AG04450 (cell line): ENCODE measurements at regions of chr9 and their contacts with region 1.

Region 1: DNA sequence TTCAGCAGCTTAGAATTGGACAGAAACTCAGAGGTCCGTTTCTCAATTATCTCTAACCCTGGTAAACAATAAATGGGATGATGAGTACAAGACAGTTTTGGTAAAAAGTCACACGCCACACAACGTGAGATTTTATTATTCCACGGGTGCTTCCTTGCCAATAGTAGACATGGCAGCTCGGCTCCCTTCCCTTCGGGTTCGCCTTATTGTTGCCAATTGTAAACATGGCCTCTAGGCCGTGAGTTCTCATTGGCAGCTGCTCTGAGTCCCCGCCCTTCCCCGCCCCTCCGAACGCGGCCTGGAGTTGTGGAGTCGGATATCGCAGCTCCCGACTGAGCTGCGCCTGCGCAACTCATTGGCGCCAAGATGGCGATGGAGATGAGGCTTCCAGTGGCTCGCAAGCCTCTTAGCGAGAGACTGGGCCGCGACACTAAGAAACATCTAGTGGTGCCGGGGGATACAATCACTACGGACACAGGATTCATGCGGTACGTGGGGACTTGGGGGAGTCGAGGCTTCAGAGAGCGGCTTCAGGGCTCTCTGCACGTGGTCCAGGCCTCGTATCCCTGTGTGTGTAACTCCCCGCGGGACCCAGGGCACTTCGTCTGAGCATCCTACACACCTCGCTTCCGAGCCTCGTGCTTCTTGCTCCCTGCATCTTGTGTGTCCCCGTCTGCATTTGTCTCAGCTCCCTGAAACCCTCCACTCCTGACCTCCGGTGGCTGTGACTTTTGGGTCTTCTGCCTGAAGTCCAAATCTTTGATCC is at the start of gene EXOSC2:
- DNase-seq: peak; percentile 96
- H3K4me3 ChIP-seq: peak within 1 kb of the TSS; percentile 92
- H3K27ac ChIP-seq: peak within 1 kb of the TSS; percentile 21
- H3K27me3 ChIP-seq: no peaks in the 10 kb centered on the region
- CTCF ChIP-seq: no peak
- polyA plus RNA-seq, gene EXOSC2: 22.9 and 29.5 TPM in 2 replicates

Region 2: DNA sequence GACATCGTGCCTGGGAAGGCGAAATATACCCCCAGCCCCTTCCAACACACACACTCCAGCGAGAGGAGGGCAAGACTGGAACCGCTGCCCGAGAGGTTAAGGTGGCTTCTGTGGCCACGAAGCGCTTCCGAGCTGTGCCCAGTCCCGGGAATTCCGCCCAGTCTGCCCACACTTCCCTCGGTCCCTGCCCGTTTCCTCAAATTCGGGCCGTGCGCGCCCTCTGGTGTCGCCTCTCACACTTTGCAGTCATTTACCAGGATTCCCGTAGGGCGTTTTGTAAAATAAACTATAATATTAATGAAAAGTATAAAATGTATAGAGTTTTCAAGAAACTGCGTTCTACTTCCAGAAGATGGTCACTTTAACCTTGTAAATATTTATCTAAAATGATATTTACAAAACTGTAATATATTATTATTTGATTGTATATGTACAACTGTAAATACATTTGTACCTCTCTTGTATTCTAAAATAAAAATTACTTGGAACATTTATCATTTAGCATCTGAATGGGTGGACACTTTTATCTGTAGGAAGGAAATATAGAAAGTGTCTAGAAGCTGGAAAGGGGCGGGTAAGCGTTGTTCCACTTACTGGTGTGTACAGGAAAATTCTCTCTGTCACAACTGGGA is 11.0 kb before region 1 on chr9:
- CTCF ChIA-PET with region 1: interaction called, 13 read pairs
- POLR2A ChIA-PET with region 1: interaction called, 3 read pairs
- DNase-seq: no peak
- H3K4me3 ChIP-seq: peak overlapping the region; percentile 36
- H3K27ac ChIP-seq: no peak overlapping the region
- H3K27me3 ChIP-seq: peaks cover 19% of the 10 kb centered on the region
- CTCF ChIP-seq: peak; percentile 86

Region 3: GRCh38 chr9:130707225-130707976 is 13.8 kb after region 1 on chr9:
- CTCF ChIA-PET with region 1: interaction called, 15 read pairs
- POLR2A ChIA-PET with region 1: interaction called, 4 read pairs
- DNase-seq: peak; percentile 54
- H3K4me3 ChIP-seq: no peak overlapping the region
- H3K27ac ChIP-seq: no peak overlapping the region
- H3K27me3 ChIP-seq: no peaks in the 10 kb centered on the region
- CTCF ChIP-seq: peak; percentile 72